IMR-90 (cell line): ENCODE measurements at regions of chr15 and their contacts with region 1.

Region 1: DNA sequence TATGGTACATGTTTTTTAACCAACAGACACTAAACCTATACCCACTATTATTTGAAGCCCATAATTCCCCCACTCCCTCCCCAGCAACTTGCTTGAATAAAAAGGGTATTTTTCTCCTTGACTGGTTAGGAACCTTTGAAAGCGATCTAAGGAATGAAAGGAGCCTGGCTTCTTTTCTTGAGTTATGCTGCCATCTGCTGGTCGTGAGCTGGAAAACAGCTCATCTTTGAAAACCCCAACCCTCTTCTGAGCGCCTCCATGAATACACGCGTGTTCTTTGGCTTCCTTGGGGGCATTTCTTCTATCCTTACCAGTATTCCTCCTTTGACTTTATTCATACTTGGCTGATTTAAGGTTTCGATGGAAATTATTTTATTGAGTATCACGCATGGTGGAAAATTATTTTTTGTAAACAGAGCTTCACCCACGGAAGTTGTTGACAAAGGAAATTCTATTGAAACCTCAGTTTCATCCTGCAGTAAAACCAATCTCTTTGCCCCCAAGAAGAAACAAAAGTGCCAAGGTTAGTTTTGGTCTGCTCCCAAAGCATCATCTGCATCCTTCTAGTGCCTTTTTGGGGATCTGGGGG is 171.6 kb downstream of the SV2B start:
- DNase-seq: peak; percentile 65
- ATAC-seq: peak; percentile 95
- H3K4me3 ChIP-seq: no peak overlapping the region
- H3K27ac ChIP-seq: no peak overlapping the region
- H3K4me1 ChIP-seq: no peaks in the 10 kb centered on the region
- H3K27me3 ChIP-seq: peaks cover 7% of the 10 kb centered on the region
- CTCF ChIP-seq: peak; percentile 85
- POLR2A ChIP-seq: no peak
- RAD21 ChIP-seq: peak; percentile 87

Region 2: DNA sequence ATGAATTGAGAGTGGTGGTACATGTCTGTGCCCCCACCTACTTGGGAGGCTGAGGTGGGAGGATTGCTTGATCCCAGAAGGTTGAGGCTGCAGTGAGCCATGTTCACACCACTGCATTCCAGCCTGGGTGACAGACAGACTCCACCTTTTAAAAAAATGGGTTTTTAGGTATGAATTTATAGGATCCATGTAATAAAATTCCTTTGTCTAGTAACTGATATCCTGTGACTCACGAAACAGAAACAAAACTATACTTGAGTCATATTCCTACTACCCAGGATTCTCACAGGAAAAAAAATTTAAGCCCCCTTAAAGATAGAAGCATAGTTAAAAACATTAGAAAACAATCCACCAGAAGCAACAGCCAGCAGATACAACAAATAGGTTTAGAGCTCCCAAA is 752.0 kb before region 1 on chr15:
- CTCF ChIA-PET with region 1: no interaction called
- POLR2A ChIA-PET with region 1: interaction called, 11 read pairs
- dilution Hi-C with region 1: no loop called
- in situ Hi-C with region 1: no loop called
- intact Hi-C with region 1: no loop called
- DNase-seq: peak; percentile 84
- ATAC-seq: peak; percentile 67
- H3K4me3 ChIP-seq: no peak overlapping the region
- H3K27ac ChIP-seq: peak overlapping the region; percentile 37; the same call in 1 of the 2 replicates
- H3K4me1 ChIP-seq: peaks cover 5% of the 10 kb centered on the region
- H3K27me3 ChIP-seq: no peaks in the 10 kb centered on the region
- CTCF ChIP-seq: no peak
- POLR2A ChIP-seq: no peak
- RAD21 ChIP-seq: no peak

Region 3: GRCh38 chr15:91049378-91050127 is 222.1 kb before region 1 on chr15:
- CTCF ChIA-PET with region 1: interaction called, 3 read pairs
- POLR2A ChIA-PET with region 1: no interaction called
- dilution Hi-C with region 1: loop called (anchors 25 kb)
- in situ Hi-C with region 1: no loop called
- intact Hi-C with region 1: no loop called
- DNase-seq: peak; percentile 53
- ATAC-seq: peak; percentile 99
- H3K4me3 ChIP-seq: no peak overlapping the region
- H3K27ac ChIP-seq: no peak overlapping the region
- H3K4me1 ChIP-seq: no peaks in the 10 kb centered on the region
- H3K27me3 ChIP-seq: peaks cover 4% of the 10 kb centered on the region
- CTCF ChIP-seq: peak; percentile 58
- POLR2A ChIP-seq: no peak
- RAD21 ChIP-seq: peak; percentile 67

Region 4: DNA sequence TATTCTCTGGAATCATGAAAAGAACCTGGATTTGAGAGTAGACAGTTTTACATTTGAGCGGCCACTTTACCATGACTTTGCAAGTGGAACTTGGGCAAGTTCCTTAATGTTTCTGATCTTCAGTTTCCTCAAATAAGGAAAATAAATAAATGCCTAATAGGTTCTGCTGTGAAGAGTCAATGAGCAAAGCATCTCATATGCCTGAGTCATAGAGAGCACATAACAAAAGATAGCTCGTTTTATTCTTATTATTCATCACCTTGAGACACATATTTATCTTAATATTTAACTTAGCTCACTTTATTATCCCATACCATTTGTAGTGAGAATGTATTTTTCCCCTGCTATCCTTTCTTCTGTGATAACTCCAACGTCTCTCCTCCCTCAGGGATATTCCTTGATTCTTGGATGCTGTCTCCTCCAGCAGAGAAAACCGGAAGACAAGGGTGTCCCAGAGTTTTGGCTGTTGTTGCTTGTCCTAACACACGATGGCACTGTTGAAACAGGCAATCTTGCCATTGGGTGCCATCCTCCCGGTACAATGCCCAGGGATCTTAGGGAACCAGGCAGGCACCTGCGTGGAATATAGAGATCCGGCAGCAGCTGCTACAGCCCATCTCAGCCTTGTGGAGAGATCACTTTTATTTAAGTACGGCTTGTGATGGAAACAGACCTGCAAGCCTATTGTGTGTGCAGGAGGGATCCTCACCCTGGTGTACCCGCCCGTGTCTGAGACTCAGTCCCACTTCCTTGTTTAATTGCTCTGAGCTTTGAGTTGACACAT is 215.9 kb before region 1 on chr15:
- CTCF ChIA-PET with region 1: interaction called, 8 read pairs
- POLR2A ChIA-PET with region 1: no interaction called
- dilution Hi-C with region 1: loop called (anchors 25 kb)
- in situ Hi-C with region 1: loop called (anchors 5 kb)
- intact Hi-C with region 1: loop called (anchors 1 kb)
- DNase-seq: peak; percentile 55
- ATAC-seq: peak; percentile 97
- H3K4me3 ChIP-seq: no peak overlapping the region
- H3K27ac ChIP-seq: no peak overlapping the region
- H3K4me1 ChIP-seq: peaks cover 2% of the 10 kb centered on the region; the same call in 1 of the 2 replicates
- H3K27me3 ChIP-seq: peaks cover 10% of the 10 kb centered on the region
- CTCF ChIP-seq: peak; percentile 68
- POLR2A ChIP-seq: no peak
- RAD21 ChIP-seq: peak; percentile 68